GM10248 (cell line): ENCODE measurements at regions of chr4 and their contacts with region 1.

Region 1: GRCh38 chr4:87093443-87094123 is 126.8 kb downstream of the KLHL8 start:
- DNase-seq: peak; percentile 73
- CTCF ChIP-seq: peak; percentile 56

Region 2: GRCh38 chr4:86927843-86928395 is 165.7 kb before region 1 on chr4:
- CTCF ChIA-PET with region 1: interaction called, 148 read pairs
- POLR2A ChIA-PET with region 1: no interaction called
- DNase-seq: no peak
- CTCF ChIP-seq: no peak

Region 3: GRCh38 chr4:87006676-87007527 is 86.7 kb before region 1 on chr4:
- CTCF ChIA-PET with region 1: interaction called, 10 read pairs
- POLR2A ChIA-PET with region 1: interaction called, 3 read pairs
- DNase-seq: peak; percentile 82
- CTCF ChIP-seq: no peak

Region 4: DNA sequence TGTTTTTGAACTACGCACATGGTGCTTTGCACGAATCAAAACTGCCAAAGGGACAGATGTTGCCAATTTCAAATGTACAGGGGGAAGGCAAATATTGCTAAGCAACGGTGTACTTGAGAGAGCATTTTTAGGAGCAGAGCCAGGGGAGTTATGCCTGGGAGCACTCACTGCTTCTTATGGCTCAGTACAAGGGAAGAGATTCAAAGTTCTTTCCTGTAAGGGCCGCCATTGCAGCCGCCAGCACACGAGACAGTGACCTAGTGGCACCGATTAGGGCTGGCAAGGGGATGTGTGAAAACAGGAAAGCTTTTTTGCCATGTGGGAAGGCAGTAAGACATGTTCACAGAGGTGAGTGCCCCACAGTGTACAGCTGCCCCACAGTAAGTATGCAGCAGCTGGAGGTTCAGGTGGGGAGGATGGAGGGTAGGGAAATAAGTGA is 25.0 kb before region 1 on chr4:
- CTCF ChIA-PET with region 1: interaction called, 12 read pairs
- POLR2A ChIA-PET with region 1: interaction called, 3 read pairs
- DNase-seq: no peak
- CTCF ChIP-seq: no peak

Region 5: DNA sequence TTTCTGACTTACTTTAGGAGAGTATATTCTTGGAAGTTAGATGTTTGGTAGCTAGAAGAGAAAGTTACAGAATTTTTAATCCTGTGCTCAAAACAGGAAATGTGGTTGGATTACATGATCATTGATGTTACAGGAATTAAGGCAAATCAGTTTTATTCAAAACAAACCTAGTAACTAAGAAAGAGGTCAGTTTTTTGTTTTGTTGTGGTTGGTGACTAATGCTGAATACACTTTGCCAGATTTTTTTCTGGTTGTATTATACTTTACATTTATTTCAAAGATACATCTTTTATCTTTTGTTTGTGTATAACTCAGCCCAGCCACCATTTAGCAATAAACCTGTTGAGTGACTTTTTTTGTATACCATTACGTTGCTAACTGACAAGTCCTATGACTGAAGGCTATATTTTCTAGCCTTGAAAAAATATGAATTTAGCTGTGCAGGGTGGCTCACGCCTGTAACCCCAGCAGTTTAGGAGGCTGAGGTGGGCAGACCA is 10.2 kb after region 1 on chr4:
- CTCF ChIA-PET with region 1: interaction called, 28 read pairs
- POLR2A ChIA-PET with region 1: no interaction called
- DNase-seq: no peak
- CTCF ChIP-seq: no peak

Region 6: DNA sequence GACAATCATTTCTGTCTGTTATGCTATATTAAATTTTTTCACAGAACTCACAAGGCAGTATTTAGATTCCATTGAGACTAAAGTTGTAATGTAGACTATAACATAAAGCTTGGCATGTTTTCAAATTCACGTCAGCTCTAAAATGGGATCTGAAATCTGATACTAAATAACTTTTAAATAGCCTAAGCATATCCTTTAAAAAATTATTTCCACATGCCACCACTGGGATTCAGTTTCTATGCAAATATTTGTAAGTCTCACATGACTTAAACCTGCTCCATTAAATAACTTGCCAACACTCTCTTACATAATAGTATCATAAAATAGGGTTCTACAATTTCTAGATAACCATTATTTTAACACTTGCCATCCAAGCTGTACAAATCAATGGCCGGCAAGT is 94.5 kb after region 1 on chr4:
- CTCF ChIA-PET with region 1: no interaction called
- POLR2A ChIA-PET with region 1: no interaction called
- DNase-seq: no peak
- CTCF ChIP-seq: no peak

Region 7: DNA sequence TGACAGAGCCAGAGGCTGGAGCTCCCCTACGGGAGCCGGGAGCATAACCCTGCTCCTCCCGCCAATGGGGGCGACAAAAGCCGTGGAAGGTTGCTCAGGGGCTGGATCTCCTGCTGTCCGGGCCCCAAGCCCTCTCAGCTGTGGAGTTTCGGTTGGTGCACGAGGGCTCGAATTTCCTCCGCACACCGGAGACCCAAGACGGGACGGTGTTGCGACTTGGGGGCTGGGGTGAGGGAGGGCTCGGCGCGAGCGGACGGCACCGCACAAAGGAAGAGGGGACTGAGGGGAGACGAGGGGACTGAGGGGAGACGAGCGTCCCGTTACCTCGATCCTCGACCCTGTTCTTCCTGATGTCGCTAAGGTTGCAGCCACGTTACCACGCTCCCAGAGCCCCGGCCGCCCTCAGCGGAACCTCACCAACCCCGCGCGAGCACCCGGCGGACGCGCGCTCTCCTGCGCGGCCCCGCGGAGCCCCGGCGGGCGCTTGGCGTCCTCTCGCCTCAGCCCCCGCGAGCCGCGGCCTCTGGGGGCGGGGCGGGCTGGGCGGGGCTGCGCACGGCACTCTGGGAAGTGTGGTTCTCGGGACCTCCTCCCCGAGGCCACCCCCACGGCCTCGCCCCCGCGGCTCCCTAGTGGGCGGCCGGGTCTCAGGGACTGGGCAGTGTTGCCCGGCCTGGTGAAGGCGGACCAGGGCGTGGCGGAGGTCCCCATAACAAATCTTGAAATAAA is 126.7 kb after region 1 on chr4 and contains the start of gene KLHL8:
- CTCF ChIA-PET with region 1: no interaction called
- POLR2A ChIA-PET with region 1: no interaction called
- DNase-seq: peak; percentile 96
- CTCF ChIP-seq: no peak